Activated naive CD4-positive, alpha-beta T cell treated with anti-CD3 and anti-CD28 coated beads for 36 hours (primary cell): ENCODE measurements at regions of chr1 and their contacts with region 1.

Region 1: GRCh38 chr1:145957443-145958319 is at the start of gene LIX1L:
- DNase-seq: peak; percentile 98
- H3K4me3 Mint-ChIP-seq: peak within 1 kb of the TSS; percentile 83
- H3K27ac Mint-ChIP-seq: peak within 1 kb of the TSS; percentile 83
- H3K4me1 Mint-ChIP-seq: peaks cover 56% of the 10 kb centered on the region
- H3K27me3 Mint-ChIP-seq: no peaks in the 10 kb centered on the region
- total RNA-seq, gene LIX1L: 43.6 to 44.3 TPM

Region 2: DNA sequence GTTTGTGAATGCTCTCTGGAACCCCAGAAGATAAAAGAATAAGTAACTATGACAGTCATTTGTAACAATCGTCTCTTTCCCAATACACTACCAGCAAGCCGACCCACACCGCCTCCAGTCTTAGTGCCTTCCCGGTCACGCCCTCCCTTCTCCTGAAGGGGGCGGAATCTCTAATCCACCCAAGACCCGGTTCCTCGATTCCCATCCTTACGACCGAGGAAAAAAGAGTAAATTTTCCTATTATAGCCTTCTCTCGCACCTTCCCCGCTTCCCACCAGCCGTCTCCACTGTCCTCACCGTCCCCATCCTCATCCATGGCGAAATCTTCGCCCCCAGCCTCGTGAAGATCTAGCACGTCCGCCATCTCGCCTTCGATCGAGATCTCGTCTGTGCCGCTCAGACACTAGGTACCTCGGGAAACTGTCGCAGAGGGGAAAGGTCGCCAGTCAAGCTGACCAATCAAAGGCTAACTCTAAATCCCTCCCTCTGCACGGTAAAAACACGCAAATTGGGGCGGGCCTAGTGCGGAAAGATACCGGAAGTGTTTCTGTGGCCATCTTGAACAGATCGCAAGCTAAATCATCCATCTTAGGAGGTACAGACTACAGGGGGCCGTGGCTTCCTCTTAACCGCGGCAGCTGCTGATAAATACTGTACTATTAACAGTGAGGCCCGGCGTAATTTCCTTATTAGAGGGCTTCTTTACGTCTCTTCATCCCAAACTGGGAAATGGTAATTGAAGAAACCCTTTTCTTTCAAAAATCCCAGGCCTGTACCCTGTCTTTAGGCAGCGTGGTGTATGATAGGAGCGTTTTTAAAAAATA is 30.4 kb before region 1 on chr1 and contains the start of gene RBM8A:
- CTCF ChIA-PET with region 1: interaction called, 14 read pairs
- intact Hi-C with region 1: loop called (anchors 1 kb)
- DNase-seq: peak; percentile 99
- H3K4me3 Mint-ChIP-seq: no peak within 1 kb of the TSS
- H3K27ac Mint-ChIP-seq: no peak within 1 kb of the TSS
- H3K4me1 Mint-ChIP-seq: peaks cover 14% of the 10 kb centered on the region
- H3K27me3 Mint-ChIP-seq: no peaks in the 10 kb centered on the region
- total RNA-seq, gene RBM8A: 241 to 242 TPM